ENCODE measurements at regions of chr22 and their contacts with region 1.

Region 1: DNA sequence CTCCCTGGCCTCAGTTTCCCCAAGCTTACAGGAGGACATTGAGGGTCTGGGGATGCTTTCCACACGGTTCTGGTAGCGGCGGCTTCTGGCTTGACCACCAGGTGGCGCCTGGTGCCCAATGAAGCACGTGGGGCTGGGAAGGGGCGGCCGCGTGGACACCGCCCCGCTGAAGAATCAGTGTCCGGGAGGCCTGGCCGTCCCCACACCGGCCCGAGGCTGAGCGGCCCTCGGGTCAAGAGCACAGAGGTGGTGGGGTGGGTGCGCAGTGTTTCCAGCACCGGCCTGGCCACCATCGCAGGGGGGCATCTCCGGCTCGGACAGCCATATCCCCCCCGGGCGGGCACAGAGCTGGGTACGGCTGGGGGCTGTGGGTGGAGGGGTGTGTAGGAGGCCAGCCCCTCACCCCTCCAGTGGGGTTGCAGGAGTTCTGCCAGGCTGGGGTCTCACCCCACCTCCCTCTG is 27.8 kb upstream of the PPARA start:
- DNase-seq: peak; percentile 90
- CTCF ChIP-seq: peak; percentile 91

Region 2: GRCh38 chr22:45994491-45995404 is 127.8 kb before region 1 on chr22:
- CTCF ChIA-PET with region 1: interaction called, 108 read pairs
- POLR2A ChIA-PET with region 1: no interaction called
- DNase-seq: peak; percentile 83
- CTCF ChIP-seq: peak; percentile 96

Region 3: DNA sequence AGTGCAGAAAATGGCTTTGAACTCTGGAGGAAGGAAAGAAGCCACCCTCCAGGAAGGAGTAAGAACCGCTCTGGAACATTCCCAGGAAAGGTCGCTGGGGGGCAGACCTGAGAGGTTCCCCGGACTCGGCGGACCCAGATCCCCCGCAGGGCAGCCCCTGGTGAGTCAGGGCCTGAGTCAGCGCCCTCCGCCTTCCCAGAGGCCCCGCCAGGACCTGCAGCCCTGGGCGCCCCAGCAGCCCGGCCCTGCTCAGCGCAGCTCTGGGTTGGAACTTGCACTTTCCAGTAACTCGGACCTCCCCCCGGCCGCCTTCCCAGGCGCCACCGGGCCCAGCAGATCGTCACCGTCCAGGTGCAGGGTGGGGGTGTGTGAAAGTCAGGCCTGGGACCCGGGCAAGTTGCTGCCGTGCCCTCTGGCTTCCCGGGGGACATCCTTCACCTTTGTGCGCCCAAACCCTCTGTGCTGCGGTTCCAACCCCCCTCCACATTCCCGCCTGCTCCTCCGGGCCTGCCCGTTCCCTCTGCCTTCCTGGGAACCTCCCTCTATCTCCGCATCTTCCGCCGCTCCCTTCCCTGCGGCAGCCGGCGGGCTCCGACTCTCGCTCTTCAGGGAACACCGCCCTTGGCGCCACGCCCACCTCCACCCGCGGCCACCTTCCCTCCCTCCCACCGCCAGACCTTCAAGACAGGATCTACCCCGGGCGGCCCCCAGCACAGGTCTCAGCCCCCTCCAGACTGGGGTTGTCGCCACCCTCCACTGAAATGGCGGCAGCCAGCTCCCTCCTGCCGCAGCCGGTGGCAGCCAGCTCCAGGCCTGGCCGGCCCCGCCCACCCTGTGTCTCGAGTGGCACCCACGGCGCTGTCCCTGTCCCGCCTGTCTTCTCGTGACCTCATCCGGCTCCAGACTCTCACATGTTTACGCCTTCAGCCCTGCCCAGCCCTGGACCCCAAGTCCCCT is 108.8 kb before region 1 on chr22:
- CTCF ChIA-PET with region 1: interaction called, 254 read pairs
- POLR2A ChIA-PET with region 1: no interaction called
- DNase-seq: peak; percentile 90
- CTCF ChIP-seq: peak; percentile 58

Region 4: DNA sequence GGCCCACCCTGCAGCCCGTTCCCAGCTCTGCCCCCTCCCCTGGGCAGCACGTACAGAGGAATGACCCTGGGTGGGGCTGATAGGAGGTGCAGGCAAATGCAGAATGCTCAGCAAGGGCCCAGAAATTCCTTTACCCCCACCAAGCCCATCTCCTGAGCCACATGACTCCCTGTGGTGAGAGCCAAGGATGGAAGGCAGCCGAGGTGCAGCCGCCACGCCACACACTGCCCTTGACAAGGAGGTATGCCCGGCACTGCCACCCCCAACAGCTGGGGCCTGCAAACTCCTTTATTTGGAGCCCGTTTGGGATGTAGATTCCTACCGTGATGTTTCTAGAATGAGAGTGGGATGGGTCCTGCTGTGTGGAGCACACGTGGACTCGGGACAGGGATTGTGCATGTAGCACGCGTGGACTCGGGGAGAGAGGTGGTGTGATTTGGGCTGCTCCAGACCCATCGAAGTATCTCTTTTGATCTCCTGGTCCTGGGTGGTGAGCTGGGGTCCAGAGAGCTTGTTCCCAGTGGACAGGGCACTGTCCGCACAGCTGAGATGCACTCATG is 187.1 kb after region 1 on chr22:
- CTCF ChIA-PET with region 1: interaction called, 107 read pairs
- POLR2A ChIA-PET with region 1: interaction called, 8 read pairs
- DNase-seq: no peak
- CTCF ChIP-seq: no peak

Region 5: DNA sequence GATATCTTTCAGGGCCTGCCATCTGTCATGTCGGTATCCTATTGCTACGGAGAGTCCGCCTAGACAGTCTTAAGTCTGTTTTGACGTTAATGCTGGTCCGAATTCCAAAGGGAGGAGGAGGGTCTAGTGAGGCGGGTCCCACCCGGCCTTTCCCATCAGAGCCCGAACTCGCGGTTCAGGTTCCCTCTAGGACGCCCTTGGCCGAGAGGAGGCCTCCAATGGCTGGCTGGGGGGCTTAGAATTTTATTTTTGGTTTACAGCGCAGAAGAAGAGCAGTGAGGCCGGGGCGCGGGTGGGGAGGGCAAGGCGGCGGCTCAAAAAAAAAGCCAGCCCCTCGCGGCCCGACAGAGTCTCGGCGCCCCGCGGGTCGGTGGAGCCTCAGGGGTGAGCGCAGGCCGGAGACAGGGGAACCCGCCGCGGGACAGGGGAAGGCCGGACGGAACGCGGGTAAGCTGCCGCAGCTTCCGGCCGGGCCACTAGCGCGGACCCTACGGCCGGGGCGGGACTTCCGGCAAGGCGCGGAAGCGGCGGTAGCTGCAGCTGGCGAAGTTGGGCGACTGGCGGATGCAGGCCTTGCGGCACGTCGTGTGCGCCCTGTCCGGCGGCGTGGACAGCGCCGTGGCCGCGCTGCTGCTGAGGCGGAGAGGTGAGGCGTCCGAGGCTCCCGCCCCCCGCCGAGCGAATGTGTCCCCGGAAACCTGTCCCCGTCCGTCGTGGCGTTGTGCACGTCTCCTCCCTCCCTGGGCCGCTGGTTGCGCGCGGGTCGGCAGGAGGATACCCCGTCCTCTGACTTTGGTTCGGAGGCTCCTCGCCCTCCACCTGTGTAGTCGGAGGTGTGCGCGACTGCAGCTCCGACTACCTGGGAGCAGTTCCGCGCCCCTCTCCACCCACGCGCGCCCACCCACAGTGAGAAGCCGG is 212.9 kb after region 1 on chr22 and contains the start of gene TRMU:
- CTCF ChIA-PET with region 1: interaction called, 13 read pairs
- POLR2A ChIA-PET with region 1: no interaction called
- DNase-seq: peak; percentile 98
- CTCF ChIP-seq: no peak

Measured in GM10248 (cell line).